Heart left ventricle (tissue), 16 donors: ENCODE measurements at regions of chr19 and their contacts with region 1.

Region 1: DNA sequence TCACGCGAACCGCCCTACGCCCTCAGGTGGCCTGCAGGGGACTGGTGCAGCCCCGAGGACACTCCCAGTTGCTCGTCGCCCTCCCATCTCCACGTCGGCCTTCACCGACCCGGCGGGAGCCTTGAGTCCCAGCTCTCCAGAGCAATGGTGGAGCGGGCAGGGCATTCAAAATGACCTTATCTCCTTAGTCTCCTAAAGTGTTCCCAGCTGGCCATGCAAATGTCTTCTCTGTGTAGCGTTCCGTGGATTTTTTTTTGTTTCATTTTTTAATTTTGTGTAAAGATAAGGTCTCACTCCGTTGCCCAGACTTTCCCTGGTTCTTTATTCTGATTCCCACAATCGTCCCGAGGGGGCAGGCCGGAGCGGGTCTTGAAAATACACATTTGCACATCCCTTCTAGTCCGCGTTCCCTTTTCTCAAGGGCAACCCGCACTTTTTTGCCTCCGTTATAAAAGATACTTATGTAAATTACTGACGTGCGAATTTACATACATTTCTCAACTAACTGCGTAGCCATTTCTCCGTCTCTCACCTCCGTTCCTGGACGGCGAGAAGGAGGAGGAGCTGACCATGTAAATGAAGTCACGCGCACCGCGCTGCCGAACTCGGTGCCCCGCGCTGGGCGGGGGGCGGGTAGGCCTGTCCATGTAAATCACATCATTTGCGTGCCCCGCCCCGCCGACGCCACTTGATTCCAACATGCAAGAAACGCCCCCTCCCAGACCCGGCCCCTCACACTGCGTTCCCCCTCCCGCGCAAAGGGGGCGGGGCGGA is 581 bp upstream of the EGLN2 start:
- DNase-seq: peak; percentile 100
- ATAC-seq: peak; percentile 84 to 90 (median 88)
- H3K4me3 ChIP-seq: peak overlapping the region in 11 of 12 donors; percentile 44 to 99 (median 94)
- H3K27ac ChIP-seq: peak overlapping the region; percentile 75 to 99 (median 96)
- H3K4me1 ChIP-seq: peaks cover 30 to 45% (median 37%) of the 10 kb centered on the region in 12 donors
- H3K27me3 ChIP-seq: no peaks in the 10 kb centered on the region
- CTCF ChIP-seq: peak in 9 of 12 donors; percentile 21 to 62 (median 52)
- POLR2A ChIP-seq: peak in 1 of 2 donors; percentile 55

Region 2: DNA sequence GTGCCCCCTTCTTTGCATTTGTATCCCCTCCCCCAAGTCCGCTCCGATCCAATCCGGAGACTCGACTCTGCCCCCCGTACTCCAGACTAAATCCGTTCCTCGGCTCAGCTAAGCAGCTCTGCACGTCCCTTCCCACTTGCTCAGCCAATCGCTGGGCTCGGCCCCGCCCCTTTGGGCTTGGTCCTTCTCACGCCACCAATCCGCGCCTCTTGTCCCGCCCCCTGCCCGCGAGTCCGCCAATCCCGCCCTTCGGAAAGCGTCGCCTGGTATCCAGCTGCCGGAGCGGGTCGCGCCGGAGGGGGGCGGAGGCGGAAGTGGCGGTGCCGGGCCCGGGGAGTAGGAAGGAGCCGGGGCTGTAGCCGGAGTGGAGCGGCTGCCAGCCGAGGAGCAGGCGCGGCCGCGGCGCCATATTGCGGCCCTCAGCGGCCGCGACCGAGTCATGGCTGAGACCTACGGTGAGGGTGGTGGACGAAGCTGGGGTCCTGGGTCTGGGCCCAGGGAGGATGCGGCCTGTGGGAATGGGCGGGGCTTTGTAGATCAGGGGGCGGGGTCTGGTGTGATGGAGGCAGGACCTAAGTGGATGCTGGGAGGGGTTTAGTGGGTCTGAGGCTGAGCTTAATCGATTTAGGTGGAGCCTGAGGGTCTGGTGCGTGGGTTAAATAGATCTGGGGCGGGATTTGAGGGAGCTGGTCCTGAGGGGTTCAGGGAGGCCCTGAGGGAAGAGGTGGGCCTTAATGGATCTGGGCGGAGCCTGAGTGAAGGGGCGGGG is 20.3 kb before region 1 on chr19 and contains the start of gene RAB4B:
- intact Hi-C with region 1: loop called in 3 of 10 experiments (anchors 1 kb)
- DNase-seq: peak; percentile 100
- ATAC-seq: peak; percentile 95 to 98 (median 97)
- H3K4me3 ChIP-seq: peak within 1 kb of the TSS; percentile 67 to 94 (median 74)
- H3K27ac ChIP-seq: peak within 1 kb of the TSS; percentile 89 to 100 (median 98)
- H3K4me1 ChIP-seq: peaks cover 0 to 25% (median 13%) of the 10 kb centered on the region in 12 donors
- H3K27me3 ChIP-seq: no peaks in the 10 kb centered on the region
- CTCF ChIP-seq: peak in 2 of 12 donors; percentile 11 to 14
- POLR2A ChIP-seq: peak; percentile 23 to 84
- total RNA-seq, gene RAB4B: 12.3 to 31.3 (median 15.0) TPM